T-cell (primary cell): ENCODE measurements at regions of chr6 and their contacts with region 1.

Region 1: GRCh38 chr6:169789982-169790927 is 38.8 kb downstream of the ERMARD start:
- DNase-seq: peak; percentile 31 to 80 (median 64)
- ATAC-seq: peak; percentile 95 to 98 (median 97)
- H3K4me3 ChIP-seq: peak overlapping the region; percentile 52 to 86
- H3K4me3 Mint-ChIP-seq: peak overlapping the region; percentile 81 to 87 (median 81)
- H3K27ac ChIP-seq: no peak overlapping the region
- H3K27ac Mint-ChIP-seq: peak overlapping the region in 1 of 2 donors; percentile 39
- H3K4me1 ChIP-seq: peaks cover 2 to 14% of the 10 kb centered on the region in 2 experiments
- H3K4me1 Mint-ChIP-seq: peaks cover 14 to 22% (median 18%) of the 10 kb centered on the region in 3 donors
- H3K27me3 ChIP-seq: peaks cover 3 to 46% of the 10 kb centered on the region in 2 experiments
- H3K27me3 Mint-ChIP-seq: peaks cover 24 to 31% of the 10 kb centered on the region in 2 donors

Region 2: DNA sequence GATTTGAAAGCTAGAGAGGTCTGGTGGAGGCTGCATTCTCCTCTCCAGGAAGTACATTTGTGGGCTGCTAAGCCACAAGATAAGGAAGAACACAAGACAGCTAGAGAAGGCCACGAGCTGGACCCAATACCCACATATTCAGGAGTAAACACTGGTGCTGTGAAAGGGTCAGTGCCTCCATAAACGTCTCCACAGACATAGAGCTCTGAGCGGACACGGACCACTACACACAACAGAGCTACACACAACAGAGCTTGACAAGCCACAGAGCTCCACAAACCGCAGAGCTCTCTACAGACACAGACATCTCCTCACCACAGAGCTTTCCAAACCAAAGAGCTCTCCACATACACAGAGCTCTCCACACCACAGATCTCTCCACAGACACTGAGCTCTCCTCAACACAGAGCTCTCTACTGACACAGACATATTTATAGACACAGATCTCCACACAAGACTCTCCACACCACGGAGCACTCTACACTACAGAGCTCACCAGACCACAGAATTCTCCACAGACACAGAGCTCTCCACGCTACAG is 13.1 kb after region 1 on chr6:
- CTCF ChIA-PET with region 1: interaction called, 11 to 44 read pairs
- POLR2A ChIA-PET with region 1: interaction called in 1 of 2 experiments, 3 read pairs
- DNase-seq: peak in 1 of 35 experiments; percentile 32
- ATAC-seq: peak; percentile 40 to 52 (median 46)
- H3K4me3 ChIP-seq: no peak overlapping the region
- H3K4me3 Mint-ChIP-seq: peak overlapping the region in 1 of 3 donors; percentile 42
- H3K27ac ChIP-seq: no peak overlapping the region
- H3K27ac Mint-ChIP-seq: no peak overlapping the region
- H3K4me1 ChIP-seq: peaks cover 15 to 53% of the 10 kb centered on the region in 2 experiments
- H3K4me1 Mint-ChIP-seq: peaks cover 50 to 54% (median 51%) of the 10 kb centered on the region in 3 donors
- H3K27me3 ChIP-seq: peaks cover 0 to 34% of the 10 kb centered on the region in 2 experiments
- H3K27me3 Mint-ChIP-seq: peaks cover 35 to 44% of the 10 kb centered on the region in 2 donors